HEK293T (cell line): ENCODE measurements at regions of chr22 and their contacts with region 1.

Region 1: GRCh38 chr22:41697126-41697775 is 2.1 kb upstream of the MEI1 start:
- DNase-seq: peak; percentile 90

Region 2: GRCh38 chr22:41582694-41583093 is 114.6 kb before region 1 on chr22:
- CTCF ChIA-PET with region 1: no interaction called
- POLR2A ChIA-PET with region 1: no interaction called
- DNase-seq: no peak

Region 3: GRCh38 chr22:41650229-41650628 is 47.0 kb before region 1 on chr22:
- CTCF ChIA-PET with region 1: no interaction called
- POLR2A ChIA-PET with region 1: no interaction called
- DNase-seq: no peak

Region 4: DNA sequence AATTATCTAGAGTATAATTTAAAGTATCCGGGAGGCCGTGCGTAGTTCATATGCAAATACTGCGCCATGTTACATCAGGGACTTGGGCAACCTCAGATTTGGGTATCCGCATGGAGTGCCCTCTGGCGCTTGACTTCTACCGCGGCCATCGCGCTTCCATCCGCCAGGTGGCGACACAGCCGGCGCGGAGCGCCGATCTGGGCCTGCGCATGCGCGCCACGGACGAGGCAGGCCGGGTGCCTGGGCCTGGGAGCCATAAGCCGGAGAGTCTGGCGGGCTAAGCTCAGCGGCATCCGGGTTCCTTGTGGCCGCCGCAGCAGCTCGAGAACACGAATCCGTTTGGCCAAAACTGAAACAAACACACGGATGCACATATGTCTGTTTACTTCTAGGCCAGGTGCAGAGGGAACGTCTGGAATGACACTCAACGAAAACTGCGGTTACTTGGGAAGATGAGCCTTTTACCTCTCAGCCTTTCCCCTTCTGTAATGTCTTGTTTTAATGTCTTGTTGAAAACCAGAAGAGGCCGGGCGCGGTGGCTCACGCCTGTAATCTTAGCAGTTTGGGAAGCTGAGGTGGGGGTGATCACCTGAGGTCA is 30.5 kb before region 1 on chr22:
- CTCF ChIA-PET with region 1: interaction called, 13 read pairs
- POLR2A ChIA-PET with region 1: interaction called, 13 read pairs
- DNase-seq: peak; percentile 99

Region 5: DNA sequence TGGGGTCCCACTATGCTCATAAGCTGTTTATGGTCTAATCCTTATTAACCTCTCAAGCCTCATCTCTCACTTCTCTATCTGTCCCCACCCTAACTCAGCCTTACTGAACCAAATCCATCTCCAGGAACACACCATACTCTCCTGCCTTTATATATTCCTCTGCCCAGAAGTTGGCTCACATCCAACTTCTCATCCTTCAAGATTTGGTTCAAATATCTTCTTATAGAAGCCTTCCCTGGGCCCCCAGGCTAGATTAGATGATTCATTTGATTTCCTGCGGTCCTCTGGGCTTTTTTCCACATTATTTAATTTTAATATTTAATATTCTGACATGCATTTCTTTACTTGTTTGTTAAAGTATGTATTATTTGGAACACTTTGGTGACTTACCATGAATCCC is 25.2 kb after region 1 on chr22:
- CTCF ChIA-PET with region 1: interaction called, 10 read pairs
- POLR2A ChIA-PET with region 1: no interaction called
- DNase-seq: no peak

Region 6: GRCh38 chr22:41762980-41763779 is 65.9 kb after region 1 on chr22:
- CTCF ChIA-PET with region 1: interaction called, 10 read pairs
- POLR2A ChIA-PET with region 1: interaction called, 3 read pairs
- DNase-seq: peak; percentile 71

Region 7: DNA sequence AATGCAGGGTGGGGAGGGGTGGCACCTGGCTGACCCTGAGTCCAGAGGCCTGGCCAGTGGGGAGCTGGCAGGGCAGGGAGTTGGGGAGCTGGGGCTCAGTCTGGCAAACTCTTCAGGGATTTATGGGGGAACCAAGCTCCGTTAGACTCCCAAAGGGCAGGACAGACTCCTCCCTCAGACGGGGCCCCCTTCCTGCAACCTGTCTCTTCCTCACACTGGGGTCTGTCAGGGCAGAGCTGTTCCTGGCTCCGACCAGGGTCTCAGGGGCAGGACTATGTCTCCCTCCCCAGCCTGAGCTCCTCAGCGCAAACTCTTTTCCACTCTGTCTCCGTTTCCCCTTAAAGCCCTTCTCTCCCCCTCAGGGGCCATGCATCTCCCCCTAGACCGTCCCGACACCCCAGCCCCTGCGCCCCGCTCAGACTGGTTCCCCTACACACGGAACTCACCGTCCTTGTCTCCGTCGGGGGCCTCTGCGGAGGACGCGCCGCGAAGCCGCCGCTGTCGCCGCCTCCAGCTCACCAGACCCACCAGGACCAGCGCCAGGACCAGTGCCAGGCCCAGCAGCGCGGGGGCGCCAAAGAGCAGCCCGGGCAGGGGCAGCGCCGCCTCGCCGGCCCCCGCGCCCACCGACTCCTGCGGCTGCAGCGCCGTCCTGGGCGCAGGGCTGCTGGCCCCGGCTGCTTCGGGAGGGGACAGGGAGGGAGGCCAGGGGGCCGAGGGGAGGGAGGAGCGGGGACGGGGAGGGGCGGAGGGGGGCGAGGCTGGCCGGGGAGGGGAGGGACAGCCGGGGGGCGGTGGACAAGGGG is 228.6 kb after region 1 on chr22:
- CTCF ChIA-PET with region 1: interaction called, 10 read pairs
- POLR2A ChIA-PET with region 1: interaction called, 4 read pairs
- DNase-seq: peak; percentile 84

Region 8: GRCh38 chr22:41946629-41947423 is 249.6 kb after region 1 on chr22 and contains the start of gene CENPM:
- CTCF ChIA-PET with region 1: interaction called, 15 read pairs
- POLR2A ChIA-PET with region 1: interaction called, 10 read pairs
- DNase-seq: peak; percentile 92